ENCODE measurements at regions of chr6 and their contacts with region 1.

Region 1: DNA sequence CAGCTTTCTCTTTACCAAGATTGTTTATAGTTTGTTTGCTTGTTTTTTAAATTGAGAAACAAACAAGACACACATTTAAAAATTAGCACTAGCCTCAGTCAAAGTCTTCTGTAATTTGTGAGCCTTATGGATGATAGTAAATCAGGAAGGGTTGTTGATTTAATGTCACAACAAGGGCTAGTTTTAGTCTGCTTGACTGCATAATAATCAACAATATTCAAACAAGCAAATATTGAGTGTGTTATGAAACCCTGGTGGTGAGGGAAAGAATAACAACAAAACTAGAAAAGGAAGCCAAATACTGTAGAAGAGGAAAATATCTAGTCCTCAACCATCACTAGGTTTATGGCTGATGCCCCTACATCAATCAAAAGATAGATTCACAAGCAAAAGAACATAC is 228.6 kb downstream of the TBC1D7 start:
- DNase-seq: no peak
- H3K4me3 ChIP-seq: no peak overlapping the region
- H3K27ac ChIP-seq: no peak overlapping the region
- H3K4me1 ChIP-seq: peaks cover 6% of the 10 kb centered on the region
- CTCF ChIP-seq: peak; percentile 63

Region 2: DNA sequence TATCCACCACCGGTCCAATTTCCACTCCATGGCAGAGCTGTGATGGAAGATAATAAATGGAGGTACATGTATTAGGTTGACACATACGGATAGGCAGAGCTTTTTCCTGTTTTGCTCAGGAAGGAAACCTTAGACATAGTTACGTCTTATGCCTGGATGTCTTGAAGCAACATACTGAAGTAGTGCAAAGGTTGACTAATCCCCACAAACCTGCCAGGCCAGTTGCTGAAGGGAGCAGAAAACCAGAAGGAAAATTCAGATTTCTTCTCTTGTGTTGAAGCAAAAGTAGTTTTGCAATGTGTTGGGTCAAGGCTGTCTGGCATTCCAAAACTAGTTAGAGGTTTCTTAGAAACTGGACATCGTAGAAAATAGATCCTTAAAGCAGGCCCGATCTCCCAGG is 314.5 kb before region 1 on chr6:
- CTCF ChIA-PET with region 1: no interaction called
- POLR2A ChIA-PET with region 1: no interaction called
- intact Hi-C with region 1: no loop called
- DNase-seq: no peak
- H3K4me3 ChIP-seq: no peak overlapping the region
- H3K27ac ChIP-seq: no peak overlapping the region
- H3K4me1 ChIP-seq: no peaks in the 10 kb centered on the region
- CTCF ChIP-seq: no peak

Region 3: DNA sequence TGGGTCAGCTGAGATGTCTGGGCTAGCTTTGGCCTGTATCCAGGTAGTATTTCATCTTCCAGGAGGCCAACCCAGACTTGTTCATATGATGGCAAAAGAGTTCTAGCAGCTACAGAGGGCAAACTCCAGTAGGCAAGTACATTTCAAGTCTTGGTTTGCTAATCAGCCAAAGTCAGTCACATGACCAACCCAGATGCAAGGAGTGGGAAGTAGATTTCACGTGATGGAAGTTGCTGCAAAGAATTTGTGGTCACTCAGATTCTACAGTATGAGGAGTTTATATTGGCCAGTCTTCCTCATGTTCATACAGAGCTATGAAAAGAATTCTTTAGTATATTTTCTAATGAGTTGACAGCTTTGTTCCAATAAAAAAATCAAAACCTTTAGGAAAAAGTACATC is 281.4 kb before region 1 on chr6:
- CTCF ChIA-PET with region 1: no interaction called
- POLR2A ChIA-PET with region 1: no interaction called
- intact Hi-C with region 1: loop called (anchors 10 kb)
- DNase-seq: no peak
- H3K4me3 ChIP-seq: no peak overlapping the region
- H3K27ac ChIP-seq: no peak overlapping the region
- H3K4me1 ChIP-seq: no peaks in the 10 kb centered on the region
- CTCF ChIP-seq: no peak

Region 4: DNA sequence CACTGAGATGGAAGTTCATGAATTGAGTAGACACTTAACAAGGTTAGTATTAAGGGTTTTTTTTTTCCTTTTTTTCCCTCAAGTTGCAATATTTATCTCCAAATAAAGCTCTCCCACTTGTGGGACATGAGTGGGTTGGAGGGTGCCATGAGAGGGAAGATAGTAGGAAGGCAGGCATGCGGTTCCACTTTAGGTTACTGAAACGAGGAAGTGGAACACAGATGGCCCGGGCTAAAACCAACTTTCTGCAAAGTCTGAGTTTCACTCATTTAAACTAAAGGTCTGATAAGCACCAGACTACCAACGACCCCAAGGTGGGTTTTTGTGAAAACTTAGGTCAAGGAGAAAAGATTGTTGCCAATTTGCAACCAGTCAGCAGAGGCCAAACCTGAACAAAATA is 186.4 kb after region 1 on chr6:
- CTCF ChIA-PET with region 1: no interaction called
- POLR2A ChIA-PET with region 1: no interaction called
- intact Hi-C with region 1: no loop called
- DNase-seq: peak; percentile 68
- H3K4me3 ChIP-seq: peak overlapping the region; percentile 7
- H3K27ac ChIP-seq: peak overlapping the region; percentile 62
- H3K4me1 ChIP-seq: peaks cover 38% of the 10 kb centered on the region
- CTCF ChIP-seq: no peak